Endothelial cell of umbilical vein (primary cell): ENCODE measurements at regions of chr12 and their contacts with region 1.

Region 1: DNA sequence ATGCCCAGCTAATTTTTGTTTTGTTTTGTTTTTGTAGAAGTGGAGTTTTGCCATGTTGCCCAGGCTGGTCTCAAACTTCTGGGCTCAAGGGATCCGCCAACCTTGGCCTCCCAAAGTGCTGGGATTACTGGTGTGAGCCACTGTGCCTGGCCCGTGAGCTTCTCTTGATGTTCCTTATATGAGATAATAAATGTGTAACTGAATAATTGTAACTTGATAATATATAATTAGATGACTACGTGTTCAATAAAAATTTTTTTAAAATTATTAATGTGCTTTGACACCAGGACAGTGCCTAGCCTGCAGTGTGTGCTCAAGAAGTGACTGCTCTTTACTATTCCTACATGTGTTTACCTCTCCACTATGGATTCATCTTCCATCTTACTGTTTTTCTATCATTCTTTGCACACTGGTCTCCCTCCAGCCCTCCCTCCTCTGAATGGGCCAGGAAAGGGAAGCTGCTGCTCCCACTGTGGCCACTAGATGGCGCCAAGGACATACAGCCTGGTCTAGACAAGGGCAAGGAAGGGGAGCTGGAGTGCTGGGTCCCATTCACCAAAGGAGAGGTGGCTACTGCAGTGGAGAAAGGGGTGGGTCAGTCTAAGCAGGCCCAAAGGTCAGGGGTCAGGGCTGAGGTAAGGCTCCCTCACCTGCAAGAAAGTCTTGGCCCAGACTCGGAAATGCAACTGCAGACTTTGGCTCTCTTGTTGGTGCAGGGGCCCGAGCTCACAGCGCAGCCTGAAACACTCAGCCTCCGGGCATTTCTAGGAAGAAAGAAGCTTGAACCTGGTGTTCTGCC is 14.7 kb upstream of the ZNF385A start:
- DNase-seq: peak; percentile 86
- H3K4me3 ChIP-seq: no peak overlapping the region
- H3K27ac ChIP-seq: no peak overlapping the region
- H3K4me1 ChIP-seq: no peaks in the 10 kb centered on the region
- H3K27me3 ChIP-seq: no peaks in the 10 kb centered on the region
- CTCF ChIP-seq: peak; percentile 94 to 98
- POLR2A ChIP-seq: peak; percentile 58

Region 2: DNA sequence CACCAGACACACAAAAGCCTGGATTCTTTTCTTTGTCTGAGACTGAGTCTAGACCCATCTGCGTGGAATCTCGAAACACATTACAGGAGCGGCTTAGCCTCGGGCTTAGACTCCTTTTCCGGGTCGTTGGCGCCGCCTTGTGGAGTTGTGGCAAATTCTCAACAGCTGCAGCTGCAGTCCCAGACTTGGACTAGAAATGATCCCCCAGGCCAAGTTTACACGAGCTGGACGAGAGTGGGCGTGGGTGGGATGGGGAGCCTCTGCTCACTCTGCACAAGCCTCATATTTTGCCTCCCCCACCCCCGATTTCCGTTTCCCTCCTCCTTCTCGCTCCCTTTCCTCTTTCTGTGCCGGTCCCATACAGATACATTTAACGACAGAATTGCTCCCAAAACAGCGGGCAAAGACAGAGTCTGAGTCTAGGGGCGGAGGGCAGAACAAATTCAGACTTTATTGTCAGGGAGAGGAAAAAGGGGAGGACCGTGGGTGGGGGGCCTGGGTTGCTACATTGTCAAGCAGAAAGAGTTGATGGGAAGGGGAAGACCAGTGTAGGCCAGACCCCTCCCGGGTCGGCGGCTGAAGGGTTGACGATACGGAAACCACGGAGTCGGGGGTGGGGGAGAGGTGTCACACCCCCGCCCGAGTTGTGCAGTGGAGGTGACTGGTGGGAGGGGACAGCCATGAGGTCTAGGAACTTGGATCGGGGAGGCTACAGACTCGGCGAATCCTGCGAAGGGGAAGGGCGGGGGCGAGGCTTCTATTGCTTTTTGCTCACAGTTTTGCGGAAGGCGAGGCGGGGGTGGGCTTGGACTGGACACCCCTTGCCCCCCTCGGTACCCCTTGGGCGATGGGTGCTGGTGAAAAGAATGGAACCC is 30.2 kb before region 1 on chr12:
- CTCF ChIA-PET with region 1: interaction called, 17 read pairs
- POLR2A ChIA-PET with region 1: no interaction called
- dilution Hi-C with region 1: no loop called
- intact Hi-C with region 1: no loop called
- DNase-seq: peak; percentile 85
- H3K4me3 ChIP-seq: peak overlapping the region; percentile 6 to 39 (median 23)
- H3K27ac ChIP-seq: no peak overlapping the region
- H3K4me1 ChIP-seq: peaks cover 33% of the 10 kb centered on the region
- H3K27me3 ChIP-seq: no peaks in the 10 kb centered on the region
- CTCF ChIP-seq: peak; percentile 91 to 92
- POLR2A ChIP-seq: no peak

Region 3: DNA sequence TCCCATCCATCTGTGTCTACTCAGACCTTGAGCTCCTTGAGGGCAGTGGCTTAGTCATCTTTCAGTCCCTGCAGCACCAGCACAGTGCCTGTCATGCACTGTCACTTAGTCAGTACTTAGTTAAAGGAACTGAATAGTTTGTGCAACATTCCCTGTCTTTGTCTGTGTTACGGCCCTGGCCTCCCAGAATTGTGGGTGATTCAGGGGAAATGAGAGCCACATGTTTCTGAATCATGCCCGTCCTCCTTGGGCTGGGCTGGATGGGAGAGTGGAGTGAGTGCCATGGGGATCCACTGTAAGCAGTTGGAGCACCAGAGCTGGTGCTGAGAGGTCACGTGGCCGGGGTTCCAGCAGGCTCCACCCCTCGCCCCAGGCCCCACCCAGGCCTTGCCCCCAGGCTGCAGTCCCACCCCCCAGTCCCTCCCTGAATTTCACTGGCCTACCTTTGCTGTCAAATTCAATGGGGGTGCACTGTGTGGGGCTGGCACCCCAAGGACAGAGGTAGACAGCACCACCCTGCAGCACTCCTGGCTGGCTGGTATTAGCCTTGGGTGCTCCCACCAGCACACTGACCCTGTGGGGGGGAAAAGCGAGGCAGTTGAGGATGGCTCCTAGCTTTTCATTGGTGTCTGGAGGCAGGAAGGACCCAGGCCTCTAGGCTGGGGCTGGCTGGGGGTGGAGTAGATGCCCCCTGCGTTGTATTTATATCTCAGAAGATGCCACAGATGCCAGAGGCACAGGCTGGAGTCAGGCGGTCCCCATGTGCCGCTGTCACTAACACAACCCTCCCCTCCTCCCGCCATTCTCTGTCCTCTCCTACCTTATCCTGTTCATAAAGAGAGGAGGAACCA is 12.4 kb after region 1 on chr12:
- CTCF ChIA-PET with region 1: interaction called, 154 read pairs
- POLR2A ChIA-PET with region 1: interaction called, 19 read pairs
- dilution Hi-C with region 1: no loop called
- intact Hi-C with region 1: loop called (anchors 1 kb)
- DNase-seq: peak; percentile 88
- H3K4me3 ChIP-seq: no peak overlapping the region
- H3K27ac ChIP-seq: peak overlapping the region; percentile 96
- H3K4me1 ChIP-seq: peaks cover 58% of the 10 kb centered on the region
- H3K27me3 ChIP-seq: no peaks in the 10 kb centered on the region
- CTCF ChIP-seq: no peak
- POLR2A ChIP-seq: no peak

Region 4: GRCh38 chr12:54419088-54419892 is 20.1 kb after region 1 on chr12 and contains the start of gene ITGA5:
- CTCF ChIA-PET with region 1: interaction called, 154 read pairs
- POLR2A ChIA-PET with region 1: no interaction called
- dilution Hi-C with region 1: no loop called
- intact Hi-C with region 1: no loop called
- DNase-seq: peak; percentile 75
- H3K4me3 ChIP-seq: peak within 1 kb of the TSS; percentile 65 to 97 (median 83)
- H3K27ac ChIP-seq: peak within 1 kb of the TSS; percentile 79
- H3K4me1 ChIP-seq: peaks cover 68% of the 10 kb centered on the region
- H3K27me3 ChIP-seq: no peaks in the 10 kb centered on the region
- CTCF ChIP-seq: no peak
- POLR2A ChIP-seq: peak; percentile 90
- total RNA-seq, gene ITGA5: 938 and 994 TPM in 2 replicates

Region 5: DNA sequence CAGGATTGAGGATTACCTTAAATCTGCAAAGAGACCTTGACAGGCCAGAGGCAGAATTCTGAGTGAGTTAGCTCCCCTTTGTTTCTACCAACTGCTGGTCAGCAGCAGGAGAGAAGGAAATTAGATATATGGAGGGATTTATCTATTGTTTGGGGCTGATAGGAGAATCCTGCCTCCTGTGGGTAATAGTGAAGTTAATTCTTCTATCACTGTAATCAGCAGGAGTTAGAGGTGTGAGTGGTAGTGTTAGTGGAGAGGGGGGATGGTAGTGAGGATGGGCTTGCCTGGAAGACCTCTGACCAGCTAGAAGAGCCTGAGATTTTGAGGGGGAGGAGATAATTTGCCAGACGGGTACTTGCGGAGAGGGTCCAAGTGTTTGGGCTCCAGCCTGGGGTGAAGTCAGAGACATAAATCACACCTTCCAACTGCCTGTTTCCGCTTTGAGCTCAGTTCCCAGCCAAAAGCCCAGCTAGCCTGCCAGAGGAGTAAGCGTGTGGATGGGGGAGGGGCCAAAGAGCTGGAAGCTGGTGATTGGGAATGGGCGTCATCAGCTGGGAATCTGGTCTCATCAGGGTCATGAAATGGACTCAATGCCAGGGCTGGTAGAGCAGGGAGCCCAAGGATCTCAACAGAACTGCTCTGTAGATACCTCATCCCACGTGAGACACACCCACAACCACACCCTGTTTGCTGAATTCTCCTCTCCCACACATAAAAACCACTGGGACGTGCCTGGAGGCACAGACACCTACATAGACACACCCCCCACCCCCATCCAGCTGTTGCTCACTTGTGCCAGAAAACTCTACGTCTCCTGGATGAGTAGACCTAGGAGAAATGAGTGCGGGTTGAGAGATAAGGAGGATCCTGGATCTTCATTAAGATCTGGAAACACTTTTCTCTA is 33.0 kb after region 1 on chr12:
- CTCF ChIA-PET with region 1: interaction called, 517 read pairs
- POLR2A ChIA-PET with region 1: interaction called, 15 read pairs
- dilution Hi-C with region 1: no loop called
- intact Hi-C with region 1: loop called (anchors 1 kb)
- DNase-seq: peak; percentile 97
- H3K4me3 ChIP-seq: peak overlapping the region in 1 of 3 experiments; percentile 39
- H3K27ac ChIP-seq: peak overlapping the region; percentile 91
- H3K4me1 ChIP-seq: peaks cover 59% of the 10 kb centered on the region
- H3K27me3 ChIP-seq: no peaks in the 10 kb centered on the region
- CTCF ChIP-seq: no peak
- POLR2A ChIP-seq: no peak

Region 6: DNA sequence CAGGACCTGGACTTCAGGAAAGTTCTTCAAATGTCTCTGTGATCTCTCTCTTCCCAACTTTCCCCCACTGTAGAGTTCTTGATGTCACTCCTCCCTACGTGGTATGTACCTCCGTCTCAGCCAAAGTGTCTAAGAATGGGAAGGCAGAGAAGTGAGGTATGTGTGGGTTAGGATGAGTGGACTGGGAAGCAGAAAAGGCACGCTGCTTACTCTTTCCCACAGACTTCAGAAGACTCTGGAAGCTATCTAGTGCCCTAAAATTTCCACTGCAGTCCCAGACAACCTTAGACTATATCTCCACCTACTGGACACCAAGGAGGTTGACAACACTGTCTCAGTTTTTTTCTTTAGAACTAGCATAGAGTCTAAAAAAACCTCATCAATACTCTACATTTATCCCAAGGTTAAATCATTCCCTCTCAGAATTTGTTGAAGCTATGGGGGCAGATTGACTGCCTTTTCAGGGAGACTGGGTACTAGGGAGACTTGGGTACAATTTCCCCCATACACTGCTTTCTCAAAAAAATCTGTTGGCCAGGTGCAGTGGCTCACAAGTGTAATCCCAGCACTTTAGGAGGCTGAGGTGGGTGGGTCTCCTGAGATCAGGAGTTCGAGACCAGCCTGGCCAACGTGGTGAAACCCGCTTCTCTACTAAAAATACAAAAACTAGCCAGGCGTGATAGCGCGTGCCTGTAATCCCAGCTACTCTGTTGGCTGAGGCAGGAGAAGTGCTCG is 40.5 kb after region 1 on chr12:
- CTCF ChIA-PET with region 1: interaction called, 517 read pairs
- POLR2A ChIA-PET with region 1: interaction called, 8 read pairs
- dilution Hi-C with region 1: no loop called
- intact Hi-C with region 1: loop called (anchors 1 kb)
- DNase-seq: peak; percentile 77
- H3K4me3 ChIP-seq: no peak overlapping the region
- H3K27ac ChIP-seq: peak overlapping the region; percentile 6
- H3K4me1 ChIP-seq: peaks cover 7% of the 10 kb centered on the region
- H3K27me3 ChIP-seq: no peaks in the 10 kb centered on the region
- CTCF ChIP-seq: peak; percentile 62 to 64
- POLR2A ChIP-seq: no peak

Region 7: DNA sequence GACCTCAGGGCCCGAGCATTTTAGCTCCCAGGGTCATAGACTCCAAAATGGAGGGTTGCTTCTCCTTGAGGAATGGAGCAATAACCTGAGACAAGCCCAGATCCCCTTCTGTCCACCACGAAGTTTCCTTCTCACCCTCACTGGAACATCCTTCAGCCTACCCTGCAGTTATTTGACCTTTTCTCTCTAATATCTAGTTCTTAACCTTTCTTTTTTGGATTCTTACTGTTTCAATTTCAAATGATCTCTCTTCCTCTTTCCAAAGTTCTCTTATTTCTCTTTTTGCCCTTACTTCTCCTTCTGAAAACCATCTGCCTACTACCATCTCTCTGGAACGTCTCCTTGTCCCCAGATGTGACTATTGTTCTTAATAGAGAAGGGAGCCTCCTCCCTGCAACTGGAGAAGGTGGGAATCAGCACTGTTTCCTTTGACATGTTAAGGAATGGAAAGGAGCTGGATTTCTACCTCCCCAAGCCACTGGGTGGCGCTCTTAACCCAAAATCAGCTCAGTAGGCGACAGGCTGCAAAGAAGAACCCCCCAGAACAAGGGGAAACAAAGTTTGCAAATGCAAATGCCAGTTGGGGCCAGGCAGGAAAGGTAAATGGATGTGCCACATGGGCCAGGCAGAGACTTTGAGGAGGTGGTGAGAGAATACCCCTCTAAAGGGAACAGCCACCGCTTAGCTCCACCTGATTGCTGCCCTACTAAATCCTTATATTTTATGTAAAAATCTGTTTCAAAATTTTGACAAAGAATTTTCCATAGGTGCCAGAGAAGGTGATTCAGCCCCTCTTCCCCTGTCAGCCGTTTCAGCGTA is 127.8 kb after region 1 on chr12:
- CTCF ChIA-PET with region 1: interaction called, 12 read pairs
- POLR2A ChIA-PET with region 1: no interaction called
- dilution Hi-C with region 1: no loop called
- intact Hi-C with region 1: no loop called
- DNase-seq: peak; percentile 40
- H3K4me3 ChIP-seq: no peak overlapping the region
- H3K27ac ChIP-seq: no peak overlapping the region
- H3K4me1 ChIP-seq: no peaks in the 10 kb centered on the region
- H3K27me3 ChIP-seq: peaks cover 32 to 34% of the 10 kb centered on the region in 2 experiments
- CTCF ChIP-seq: peak; percentile 69
- POLR2A ChIP-seq: no peak